Cardiac septum (tissue), 1 donor: ENCODE measurements at regions of chr21 and their contacts with region 1.

Region 1: GRCh38 chr21:40466893-40467501 is 380.0 kb downstream of the DSCAM start:
- DNase-seq: no peak

Region 2: GRCh38 chr21:40575976-40576375 is 109.0 kb after region 1 on chr21:
- intact Hi-C with region 1: no loop called
- DNase-seq: no peak

Region 3: DNA sequence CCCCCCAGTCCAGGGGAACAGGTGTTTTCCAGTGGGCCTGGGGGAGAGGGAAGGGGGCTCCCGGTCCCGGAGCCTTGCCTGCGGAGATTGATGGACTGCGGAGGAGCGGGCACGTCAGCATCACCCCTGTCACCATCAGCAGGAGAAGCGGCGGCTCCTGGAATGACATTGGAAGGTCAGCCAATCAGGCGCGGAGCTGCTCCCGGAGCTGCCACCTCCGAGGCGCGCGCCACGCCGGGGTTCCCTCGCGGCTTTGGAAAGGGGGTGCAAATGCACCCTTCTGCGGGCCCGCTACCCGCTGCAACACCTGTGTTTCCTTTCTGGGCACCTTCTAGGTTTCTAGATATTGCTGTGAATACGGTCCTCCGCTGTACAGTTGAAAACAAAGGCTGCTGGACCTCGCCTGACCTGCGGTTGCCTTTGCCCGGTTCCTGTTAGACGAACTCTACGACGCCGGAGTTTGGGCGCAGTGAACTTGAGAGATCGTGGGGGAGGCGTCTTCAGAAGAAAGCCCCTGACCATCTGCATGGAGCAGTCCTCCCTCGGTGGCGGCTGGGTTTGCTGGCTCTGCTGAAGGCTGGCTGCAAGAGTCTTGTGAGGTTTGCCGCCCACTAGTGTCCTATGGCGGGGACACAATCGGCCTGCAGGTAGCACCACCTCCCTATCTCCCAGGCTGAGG is 374.7 kb after region 1 on chr21:
- intact Hi-C with region 1: loop called (anchors 10 kb)
- DNase-seq: no peak

Region 4: DNA sequence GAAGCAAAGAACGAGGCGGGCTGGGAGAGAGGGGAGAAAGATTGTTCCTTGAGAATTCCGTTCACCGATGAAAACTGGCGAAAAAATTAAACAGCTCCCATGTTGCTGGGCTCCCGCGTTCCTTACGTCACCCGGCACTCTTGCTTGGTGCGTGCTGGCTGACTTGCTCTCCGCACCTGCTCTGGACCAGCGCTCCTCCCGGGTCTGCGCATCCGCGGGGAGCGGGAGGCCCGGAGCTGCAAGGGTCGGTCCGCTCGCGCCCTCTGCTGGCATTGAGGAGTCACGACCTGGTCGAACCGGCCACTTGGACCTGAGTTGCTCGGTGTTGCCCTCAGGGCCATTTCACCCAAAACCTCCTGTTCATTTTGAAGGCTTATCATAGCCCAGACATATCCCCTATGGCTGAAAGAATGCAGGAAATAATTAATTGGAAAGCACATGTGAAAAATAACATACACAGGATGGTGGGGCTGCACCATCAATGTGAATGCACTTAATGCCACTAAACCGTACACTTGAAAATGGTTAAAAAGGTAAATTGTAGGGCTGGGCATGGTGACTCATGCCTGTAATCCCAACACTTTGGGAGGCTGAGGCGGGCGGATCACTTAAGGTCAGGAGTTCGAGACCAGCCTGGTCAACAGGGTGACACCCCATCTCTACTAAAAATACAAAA is 602.1 kb after region 1 on chr21:
- intact Hi-C with region 1: loop called (anchors 2 kb)
- DNase-seq: peak; percentile 86